Common myeloid progenitor, CD34-positive (primary cell): ENCODE measurements at regions of chr5 and their contacts with region 1.

Region 1: GRCh38 chr5:82351754-82352145 is 73.6 kb upstream of the RPS23 start:
- DNase-seq: peak; percentile 55 to 77 (median 68)
- H3K4me3 ChIP-seq: no peak overlapping the region
- H3K27ac ChIP-seq: no peak overlapping the region
- H3K4me1 ChIP-seq: peaks cover 3 to 13% (median 5%) of the 10 kb centered on the region in 4 experiments
- H3K27me3 ChIP-seq: no peaks in the 10 kb centered on the region

Region 2: DNA sequence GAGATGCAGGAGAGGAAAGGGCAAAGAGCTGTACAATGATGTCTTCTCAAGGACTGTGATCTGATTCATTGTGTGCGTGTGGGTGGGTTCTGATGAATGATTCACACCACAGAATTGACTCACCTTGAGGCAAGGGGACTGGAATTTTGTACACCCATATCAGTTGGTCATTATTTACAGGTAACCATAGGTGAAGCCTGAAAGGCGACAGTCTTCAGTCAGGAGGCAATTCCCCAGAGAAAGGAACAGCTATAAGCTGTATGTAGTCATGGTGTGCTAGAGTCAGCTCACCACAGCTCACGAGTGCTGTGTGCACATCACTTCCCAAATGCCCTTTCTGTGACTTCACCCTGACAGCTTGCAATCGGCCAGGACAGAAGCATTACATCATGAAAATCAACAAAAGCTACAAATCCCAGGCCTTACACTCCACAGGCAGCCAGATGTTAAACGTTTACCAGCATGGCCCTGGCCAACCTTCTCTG is 14.0 kb after region 1 on chr5:
- CTCF ChIA-PET with region 1: interaction called, 23 read pairs
- POLR2A ChIA-PET with region 1: no interaction called
- DNase-seq: no peak
- H3K4me3 ChIP-seq: no peak overlapping the region
- H3K27ac ChIP-seq: no peak overlapping the region
- H3K4me1 ChIP-seq: peaks cover 0 to 11% (median 6%) of the 10 kb centered on the region in 4 experiments
- H3K27me3 ChIP-seq: no peaks in the 10 kb centered on the region

Region 3: DNA sequence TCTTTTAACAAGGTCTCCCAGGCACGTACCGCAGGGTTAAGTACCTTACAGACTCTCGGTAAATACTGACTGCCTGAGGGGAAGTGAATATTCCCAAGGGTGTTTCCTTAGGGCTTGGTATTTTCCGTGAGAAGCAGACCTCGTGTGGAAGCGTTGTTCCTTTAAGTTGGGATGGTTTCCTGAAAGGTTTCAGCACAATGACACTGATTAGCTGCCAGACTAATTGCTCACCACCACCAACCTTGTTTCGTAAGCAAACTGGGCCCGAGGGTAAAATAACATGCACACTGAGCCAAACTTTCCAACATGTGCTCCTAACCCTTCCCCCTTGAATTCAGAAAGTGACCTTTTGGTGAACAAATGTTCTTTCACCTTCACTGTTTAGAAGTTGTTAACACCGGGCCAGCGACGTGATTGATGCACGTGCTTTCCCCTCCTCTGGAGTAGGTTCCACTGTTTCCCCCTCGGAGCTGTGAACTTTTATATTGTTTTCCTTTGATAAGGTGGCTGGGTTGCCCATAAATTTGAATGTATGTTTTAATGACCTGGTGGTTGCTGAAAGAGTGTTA is 54.5 kb after region 1 on chr5:
- CTCF ChIA-PET with region 1: no interaction called
- POLR2A ChIA-PET with region 1: no interaction called
- DNase-seq: no peak
- H3K4me3 ChIP-seq: no peak overlapping the region
- H3K27ac ChIP-seq: no peak overlapping the region
- H3K4me1 ChIP-seq: no peaks in the 10 kb centered on the region
- H3K27me3 ChIP-seq: no peaks in the 10 kb centered on the region